Dorsolateral prefrontal cortex (tissue), 120 donors: ENCODE measurements at regions of chr1 and their contacts with region 1.

Region 1: DNA sequence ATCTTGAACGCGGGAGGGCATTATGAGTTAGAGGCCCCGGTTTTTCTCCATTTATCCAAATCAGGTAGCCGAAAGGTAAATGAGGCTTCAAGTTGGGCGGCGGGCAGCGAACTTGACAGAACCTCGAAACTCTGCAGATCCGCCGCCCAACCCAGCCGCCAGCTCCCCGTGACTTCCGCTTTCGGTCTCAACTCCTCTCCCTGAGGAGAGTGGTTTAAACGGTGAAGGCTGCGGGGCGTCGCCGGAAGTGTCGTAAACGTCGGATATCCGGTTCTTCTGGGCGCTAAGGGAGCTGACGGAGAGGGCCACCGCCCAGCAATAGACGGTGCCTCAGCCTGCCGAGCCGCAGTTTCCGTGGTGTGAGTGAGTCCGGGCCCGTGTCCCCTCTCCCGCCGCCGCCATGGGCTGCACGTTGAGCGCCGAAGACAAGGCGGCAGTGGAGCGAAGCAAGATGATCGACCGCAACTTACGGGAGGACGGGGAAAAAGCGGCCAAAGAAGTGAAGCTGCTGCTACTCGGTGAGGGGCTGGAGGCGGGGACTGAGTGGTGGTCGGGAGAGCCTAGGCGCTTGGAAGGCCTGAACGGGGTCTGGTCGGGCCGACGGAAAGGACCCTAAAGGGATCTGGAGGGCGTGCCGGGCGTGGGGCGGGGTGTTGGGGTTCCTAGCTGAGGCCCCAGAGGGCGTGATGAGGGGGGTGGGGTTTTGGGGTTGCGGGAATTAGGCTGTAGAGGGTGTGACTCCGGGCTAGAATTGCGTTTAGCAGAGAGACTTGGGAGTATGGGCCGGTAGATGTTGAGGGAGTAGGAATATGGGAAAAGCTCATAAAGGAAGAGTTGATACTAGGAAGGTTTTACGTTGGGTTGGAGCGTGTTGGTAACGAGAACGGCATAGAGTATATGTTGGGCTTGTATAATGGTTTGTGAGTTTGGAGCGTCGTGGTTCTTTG is at the start of gene GNAI3:
- DNase-seq: peak; percentile 96 to 99 (median 98)
- H3K4me3 ChIP-seq: peak within 1 kb of the TSS; percentile 70 to 99 (median 93)
- H3K27ac ChIP-seq: peak within 1 kb of the TSS; percentile 46 to 98 (median 90)
- H3K27me3 ChIP-seq: no peaks in the 10 kb centered on the region
- CTCF ChIP-seq: peak in 33 of 56 donors; percentile 7 to 65 (median 30)
- total RNA-seq, gene GNAI3: 3.6 to 7.2 (median 5.2) TPM

Region 2: GRCh38 chr1:109624201-109625010 is 75.8 kb after region 1 on chr1:
- intact Hi-C with region 1: loop called in 1 of 2 experiments (anchors 5 kb)
- DNase-seq: no peak
- H3K4me3 ChIP-seq: peak overlapping the region; percentile 16 to 85 (median 53)
- H3K27ac ChIP-seq: peak overlapping the region in 54 of 59 donors; percentile 7 to 91 (median 74)
- H3K27me3 ChIP-seq: no peaks in the 10 kb centered on the region
- CTCF ChIP-seq: no peak

Region 3: DNA sequence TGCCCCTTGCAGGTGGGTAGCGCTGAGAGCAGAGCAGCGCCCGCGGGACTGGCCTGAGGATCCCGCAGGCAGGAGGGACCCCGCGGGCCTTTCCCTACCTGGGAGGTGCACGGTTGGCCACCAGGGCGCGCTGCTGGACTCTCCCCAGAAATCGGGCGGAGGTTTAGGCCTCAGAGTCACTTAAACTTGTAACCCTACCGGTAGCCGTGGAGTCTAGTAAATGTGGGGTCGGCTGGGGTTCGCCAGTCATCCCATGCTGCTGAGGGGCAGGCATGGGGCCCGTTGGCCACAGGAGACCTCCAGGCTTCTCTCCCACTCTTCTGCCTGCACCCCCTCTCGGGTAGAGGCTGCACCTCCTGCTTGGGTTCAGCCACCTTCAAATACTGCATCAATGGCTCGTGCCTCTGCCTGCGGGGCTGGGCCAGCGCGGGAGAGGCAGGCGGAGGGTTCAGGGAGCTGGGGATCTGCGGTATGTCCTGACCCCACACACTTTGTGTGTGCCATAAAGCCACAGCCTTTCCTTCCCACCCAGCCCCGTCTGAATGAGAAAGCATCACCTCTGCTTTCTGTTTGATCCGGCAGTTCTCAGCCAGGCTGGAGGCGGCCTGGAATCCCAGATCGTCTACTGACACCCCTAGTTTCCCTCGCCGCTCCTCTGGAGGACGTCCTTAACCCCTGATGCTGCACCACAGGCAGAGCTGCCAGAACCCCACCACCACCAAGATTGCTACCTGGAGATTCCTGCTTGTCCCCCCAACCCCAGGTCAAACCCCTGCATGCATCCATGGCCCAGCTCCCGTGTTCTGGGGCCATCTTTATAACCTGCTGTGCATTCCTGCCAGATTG is 95.0 kb after region 1 on chr1:
- intact Hi-C with region 1: loop called (anchors 5 kb)
- DNase-seq: peak in 5 of 10 donors; percentile 50 to 71 (median 63)
- H3K4me3 ChIP-seq: peak overlapping the region in 11 of 59 donors; percentile 2 to 28 (median 13)
- H3K27ac ChIP-seq: peak overlapping the region in 3 of 59 donors; percentile 11 to 47 (median 28)
- H3K27me3 ChIP-seq: no peaks in the 10 kb centered on the region
- CTCF ChIP-seq: peak; percentile 38 to 81 (median 65)